Colonic mucosa (tissue), 4 donors: ENCODE measurements at regions of chr21 and their contacts with region 1.

Region 1: GRCh38 chr21:21921421-21922232 is 923.4 kb downstream of the NCAM2 start:
- DNase-seq: no peak
- H3K4me3 ChIP-seq: no peak overlapping the region
- H3K27ac ChIP-seq: no peak overlapping the region
- H3K4me1 ChIP-seq: no peaks in the 10 kb centered on the region
- H3K27me3 ChIP-seq: no peaks in the 10 kb centered on the region
- CTCF ChIP-seq: peak; percentile 45

Region 2: DNA sequence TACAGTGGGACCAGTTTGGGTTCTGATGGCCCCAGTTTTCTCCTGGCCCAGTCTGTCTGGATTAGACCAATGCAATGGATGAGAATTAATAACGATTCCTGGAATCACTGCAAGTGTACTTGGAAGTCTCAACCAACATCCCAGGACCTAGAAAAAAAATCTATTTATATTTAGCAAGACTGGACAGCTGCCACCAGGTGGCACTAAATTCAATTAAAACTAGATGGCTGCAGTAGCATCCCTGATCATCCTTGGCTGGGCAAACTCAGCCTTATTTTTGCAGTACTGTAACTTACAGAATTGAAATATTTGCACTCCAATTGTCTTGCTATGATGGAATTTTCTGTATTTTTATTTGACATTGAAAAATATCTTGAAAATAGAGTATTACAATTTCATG is 757.7 kb before region 1 on chr21:
- intact Hi-C with region 1: loop called (anchors 5 kb)
- DNase-seq: peak; percentile 24
- H3K4me3 ChIP-seq: no peak overlapping the region
- H3K27ac ChIP-seq: no peak overlapping the region
- H3K4me1 ChIP-seq: no peaks in the 10 kb centered on the region
- H3K27me3 ChIP-seq: no peaks in the 10 kb centered on the region
- CTCF ChIP-seq: peak; percentile 58